Transverse colon (tissue), 4 donors: ENCODE measurements at regions of chr2 and their contacts with region 1.

Region 1: GRCh38 chr2:70639841-70640436 is 86.3 kb upstream of the TGFA start:
- DNase-seq: no peak
- H3K4me3 ChIP-seq: no peak overlapping the region
- H3K27ac ChIP-seq: no peak overlapping the region
- H3K4me1 ChIP-seq: no peaks in the 10 kb centered on the region
- H3K27me3 ChIP-seq: peaks cover 6% of the 10 kb centered on the region
- CTCF ChIP-seq: no peak
- EP300 ChIP-seq: no peak
- POLR2A ChIP-seq: no peak

Region 2: DNA sequence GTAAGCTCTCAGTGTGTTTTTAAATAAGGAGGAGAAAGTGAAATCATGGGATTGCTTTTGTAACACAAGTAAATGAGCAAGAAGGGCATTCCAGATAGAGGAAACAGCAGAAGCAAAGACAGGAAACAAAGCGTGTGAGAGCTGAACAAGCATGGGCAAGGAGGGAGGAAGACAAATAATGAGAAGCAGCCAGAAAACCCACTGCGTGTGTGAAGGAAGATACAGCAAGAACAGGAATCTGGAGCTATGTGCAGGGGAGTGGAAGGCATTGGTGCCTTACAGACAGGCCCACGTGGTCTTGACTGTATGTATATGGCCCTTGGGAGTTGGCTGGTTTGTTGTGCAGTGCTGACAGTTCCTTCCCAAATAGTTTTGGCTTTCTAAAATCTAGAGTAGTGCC is 1085.0 kb before region 1 on chr2:
- in situ Hi-C with region 1: no loop called
- intact Hi-C with region 1: no loop called
- DNase-seq: no peak
- H3K4me3 ChIP-seq: no peak overlapping the region
- H3K27ac ChIP-seq: no peak overlapping the region
- H3K4me1 ChIP-seq: peaks cover 0 to 37% (median 9%) of the 10 kb centered on the region in 4 donors
- H3K27me3 ChIP-seq: no peaks in the 10 kb centered on the region
- CTCF ChIP-seq: no peak
- EP300 ChIP-seq: no peak
- POLR2A ChIP-seq: no peak

Region 3: DNA sequence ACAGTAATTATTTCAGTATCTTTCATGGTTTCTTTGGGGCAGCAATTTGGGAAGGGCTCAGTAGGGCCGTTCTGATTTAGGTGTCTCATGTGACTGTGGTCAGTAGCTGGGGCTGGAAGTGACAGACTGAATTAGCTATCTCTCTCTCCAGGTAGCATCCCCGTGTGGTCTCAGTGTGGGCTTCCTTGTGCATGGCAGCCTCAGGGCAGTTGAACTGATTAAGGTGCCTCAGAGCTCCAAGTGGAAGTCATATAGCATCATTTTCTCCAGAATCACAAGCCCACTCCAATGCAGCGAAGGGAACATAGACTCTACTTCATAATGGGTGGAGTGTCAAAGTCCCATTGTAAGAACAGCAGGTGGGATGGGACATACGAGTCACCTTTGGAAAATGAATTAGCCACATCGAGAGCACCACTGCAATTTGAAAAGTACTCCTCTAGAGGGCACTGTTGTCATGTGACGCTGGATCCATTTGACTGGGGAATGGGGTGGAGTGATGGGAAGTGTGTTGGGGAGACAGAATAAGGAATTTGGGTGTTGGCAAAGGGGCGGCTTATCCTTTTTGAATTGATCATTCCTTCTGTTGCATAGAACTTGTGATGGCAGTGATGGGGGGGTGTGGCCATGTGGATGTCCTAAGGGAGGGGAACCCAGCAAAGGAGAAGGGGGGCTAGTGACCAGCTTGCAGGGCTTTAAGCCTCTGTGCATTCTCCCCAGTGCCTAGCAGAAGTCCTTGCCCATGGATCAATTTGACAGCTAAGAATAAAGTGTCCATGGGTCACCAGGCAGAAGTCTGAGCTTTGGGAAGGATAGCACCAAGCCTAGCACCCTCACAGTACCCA is 298.8 kb before region 1 on chr2:
- in situ Hi-C with region 1: loop called in 1 of 4 experiments (anchors 10 kb)
- intact Hi-C with region 1: no loop called
- DNase-seq: peak; percentile 35
- H3K4me3 ChIP-seq: no peak overlapping the region
- H3K27ac ChIP-seq: no peak overlapping the region
- H3K4me1 ChIP-seq: no peaks in the 10 kb centered on the region
- H3K27me3 ChIP-seq: no peaks in the 10 kb centered on the region
- CTCF ChIP-seq: peak; percentile 66 to 90 (median 76)
- EP300 ChIP-seq: no peak
- POLR2A ChIP-seq: no peak